Caco-2 (cell line): ENCODE measurements at regions of chr10 and their contacts with region 1.

Region 1: GRCh38 chr10:59181668-59182067 is 5.2 kb downstream of the PHYHIPL start:
- DNase-seq: peak; percentile 51 to 78
- H3K4me3 ChIP-seq: no peak overlapping the region
- H3K4me3 Mint-ChIP-seq: no peak overlapping the region
- H3K27ac Mint-ChIP-seq: no peak overlapping the region
- H3K4me1 ChIP-seq: peaks cover 4% of the 10 kb centered on the region; the same call in 1 of the 2 replicates
- H3K4me1 Mint-ChIP-seq: peaks cover 7% of the 10 kb centered on the region
- H3K27me3 ChIP-seq: no peaks in the 10 kb centered on the region
- H3K27me3 Mint-ChIP-seq: no peaks in the 10 kb centered on the region
- CTCF ChIP-seq: peak; percentile 87 to 89

Region 2: DNA sequence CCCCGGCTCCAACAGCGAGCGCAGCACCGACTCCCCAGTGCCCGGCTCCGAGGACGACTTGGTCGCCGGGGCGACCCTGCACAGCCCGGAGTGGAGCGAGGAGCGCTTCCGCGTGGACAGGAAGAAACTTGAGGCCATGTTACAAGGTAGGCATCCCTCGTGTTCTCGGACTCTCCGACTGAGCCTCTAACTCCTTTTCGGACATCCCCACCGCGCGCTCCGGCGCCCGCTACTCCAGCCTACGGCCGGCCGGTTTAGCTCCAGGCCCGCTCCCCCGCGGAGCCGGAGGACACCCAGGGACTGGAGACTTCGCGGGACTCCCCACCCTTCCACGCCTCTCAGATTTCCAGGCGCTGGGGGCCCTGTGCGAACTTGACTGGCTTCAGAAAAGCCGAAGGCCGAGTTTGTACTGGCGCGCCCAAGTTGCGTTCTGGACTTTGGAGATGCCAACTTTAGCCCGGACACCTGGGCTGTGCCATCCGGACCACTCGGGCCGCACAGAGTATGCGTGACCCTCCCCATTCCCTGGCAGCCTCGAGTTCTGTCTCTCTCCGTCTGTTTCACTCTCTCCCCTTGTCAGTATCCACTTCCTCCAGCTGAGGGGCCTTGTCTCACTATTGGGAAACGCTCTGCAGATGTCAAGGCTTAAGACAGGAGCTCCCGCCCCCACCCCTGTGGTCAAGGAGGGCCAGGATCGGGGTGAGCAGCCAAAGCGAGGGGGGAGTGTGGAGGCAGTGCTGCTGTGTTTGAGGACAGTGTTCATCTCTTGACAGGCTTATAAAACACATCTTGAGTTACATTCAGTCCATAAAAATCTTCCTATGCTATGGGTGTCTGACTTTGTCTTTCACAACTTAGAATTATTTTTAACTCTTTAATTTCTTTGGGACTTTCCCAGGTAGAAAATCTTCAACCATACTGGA is 668.2 kb before region 1 on chr10:
- CTCF ChIA-PET with region 1: no interaction called
- POLR2A ChIA-PET with region 1: interaction called, 6 read pairs
- intact Hi-C with region 1: loop called (anchors 10 kb)
- DNase-seq: peak; percentile 89 to 91
- H3K4me3 ChIP-seq: peak overlapping the region; percentile 98
- H3K4me3 Mint-ChIP-seq: peak overlapping the region; percentile 94
- H3K27ac Mint-ChIP-seq: peak overlapping the region; percentile 78
- H3K4me1 ChIP-seq: peaks cover 33% of the 10 kb centered on the region
- H3K4me1 Mint-ChIP-seq: peaks cover 19% of the 10 kb centered on the region
- H3K27me3 ChIP-seq: no peaks in the 10 kb centered on the region
- H3K27me3 Mint-ChIP-seq: no peaks in the 10 kb centered on the region
- CTCF ChIP-seq: no peak

Region 3: GRCh38 chr10:58641095-58641531 is 540.6 kb before region 1 on chr10:
- CTCF ChIA-PET with region 1: no interaction called
- POLR2A ChIA-PET with region 1: no interaction called
- intact Hi-C with region 1: loop called (anchors 10 kb)
- DNase-seq: peak; percentile 70 to 77
- H3K4me3 ChIP-seq: no peak overlapping the region
- H3K4me3 Mint-ChIP-seq: peak overlapping the region; percentile 44
- H3K27ac Mint-ChIP-seq: peak overlapping the region; percentile 60
- H3K4me1 ChIP-seq: peaks cover 42% of the 10 kb centered on the region
- H3K4me1 Mint-ChIP-seq: peaks cover 55% of the 10 kb centered on the region
- H3K27me3 ChIP-seq: no peaks in the 10 kb centered on the region
- H3K27me3 Mint-ChIP-seq: no peaks in the 10 kb centered on the region
- CTCF ChIP-seq: peak; percentile 60 to 73

Region 4: DNA sequence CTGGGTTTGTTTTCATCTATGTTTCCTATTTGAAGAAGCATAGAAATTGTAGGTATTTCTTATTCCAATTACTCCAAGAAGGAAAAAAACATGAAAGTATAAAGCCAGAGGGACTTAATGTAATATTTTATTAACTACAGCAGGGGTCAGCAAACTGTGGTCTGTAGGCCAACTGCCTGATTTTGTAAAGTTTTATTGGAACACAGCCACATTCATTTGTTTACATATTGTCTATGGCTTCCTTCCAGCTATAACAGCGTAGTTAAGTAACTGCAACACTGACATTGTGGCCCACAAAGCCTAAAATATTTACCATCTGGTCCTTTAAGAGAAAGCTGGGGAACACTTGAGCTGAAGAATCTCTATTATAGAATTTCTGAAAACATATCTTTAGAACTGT is 362.8 kb before region 1 on chr10:
- CTCF ChIA-PET with region 1: no interaction called
- POLR2A ChIA-PET with region 1: no interaction called
- intact Hi-C with region 1: loop called (anchors 10 kb)
- DNase-seq: no peak
- H3K4me3 ChIP-seq: no peak overlapping the region
- H3K4me3 Mint-ChIP-seq: no peak overlapping the region
- H3K27ac Mint-ChIP-seq: no peak overlapping the region
- H3K4me1 ChIP-seq: peaks cover 36% of the 10 kb centered on the region
- H3K4me1 Mint-ChIP-seq: peaks cover 64% of the 10 kb centered on the region
- H3K27me3 ChIP-seq: no peaks in the 10 kb centered on the region
- H3K27me3 Mint-ChIP-seq: no peaks in the 10 kb centered on the region
- CTCF ChIP-seq: peak in 1 of 2 experiments; percentile 14

Region 5: GRCh38 chr10:58967551-58968388 is 213.9 kb before region 1 on chr10:
- CTCF ChIA-PET with region 1: no interaction called
- POLR2A ChIA-PET with region 1: no interaction called
- intact Hi-C with region 1: loop called (anchors 1 kb)
- DNase-seq: peak; percentile 89 to 92
- H3K4me3 ChIP-seq: no peak overlapping the region
- H3K4me3 Mint-ChIP-seq: peak overlapping the region; percentile 20
- H3K27ac Mint-ChIP-seq: peak overlapping the region; percentile 14
- H3K4me1 ChIP-seq: peaks cover 31% of the 10 kb centered on the region
- H3K4me1 Mint-ChIP-seq: peaks cover 47% of the 10 kb centered on the region
- H3K27me3 ChIP-seq: no peaks in the 10 kb centered on the region
- H3K27me3 Mint-ChIP-seq: no peaks in the 10 kb centered on the region
- CTCF ChIP-seq: no peak

Region 6: DNA sequence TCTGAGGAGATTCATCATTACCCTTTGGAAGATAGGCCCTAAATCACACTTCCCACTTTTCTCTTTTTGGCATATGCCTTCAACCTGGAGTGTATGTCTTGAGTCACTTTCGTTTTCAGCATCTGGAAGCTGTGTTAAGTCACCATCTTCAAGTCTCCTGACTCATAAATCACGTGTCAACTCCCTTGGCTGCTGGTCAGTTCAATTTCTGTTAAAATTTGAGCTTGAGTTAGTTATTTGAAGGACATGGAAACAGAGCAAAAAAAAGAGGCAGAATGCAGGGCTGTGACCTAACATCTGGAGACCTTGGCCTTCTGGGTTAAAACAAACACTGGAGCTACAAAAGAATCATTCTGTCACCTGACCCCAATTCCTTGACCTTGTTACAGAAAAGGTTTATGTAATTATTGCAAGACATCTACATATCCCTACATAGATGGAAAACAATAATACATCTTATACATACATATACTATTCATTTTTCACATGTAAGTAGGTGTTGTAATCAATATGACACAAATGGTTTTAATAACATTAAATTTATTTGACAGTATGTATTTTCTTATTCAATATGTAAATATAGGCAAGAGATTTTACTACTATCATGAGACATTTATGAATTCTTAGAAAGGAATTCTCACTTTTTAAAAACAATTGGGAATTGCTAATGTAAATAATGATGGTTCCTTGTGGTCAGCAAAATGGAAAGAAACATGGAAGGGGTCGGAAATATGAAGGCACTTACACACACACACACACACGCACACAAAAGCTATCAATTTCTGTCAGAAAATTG is 175.0 kb before region 1 on chr10:
- CTCF ChIA-PET with region 1: no interaction called
- POLR2A ChIA-PET with region 1: interaction called, 4 read pairs
- intact Hi-C with region 1: loop called (anchors 2 kb)
- DNase-seq: no peak
- H3K4me3 ChIP-seq: no peak overlapping the region
- H3K4me3 Mint-ChIP-seq: peak overlapping the region; percentile 2
- H3K27ac Mint-ChIP-seq: peak overlapping the region; percentile 68
- H3K4me1 ChIP-seq: peaks cover 76% of the 10 kb centered on the region
- H3K4me1 Mint-ChIP-seq: peaks cover 55% of the 10 kb centered on the region
- H3K27me3 ChIP-seq: no peaks in the 10 kb centered on the region
- H3K27me3 Mint-ChIP-seq: no peaks in the 10 kb centered on the region
- CTCF ChIP-seq: no peak

Region 7: GRCh38 chr10:59227136-59227673 is 45.5 kb after region 1 on chr10:
- CTCF ChIA-PET with region 1: interaction called, 3 read pairs
- POLR2A ChIA-PET with region 1: no interaction called
- intact Hi-C with region 1: loop called (anchors 2 kb)
- DNase-seq: peak in 1 of 2 experiments; percentile 34
- H3K4me3 ChIP-seq: no peak overlapping the region
- H3K4me3 Mint-ChIP-seq: no peak overlapping the region
- H3K27ac Mint-ChIP-seq: no peak overlapping the region
- H3K4me1 ChIP-seq: peaks cover 16% of the 10 kb centered on the region
- H3K4me1 Mint-ChIP-seq: peaks cover 23% of the 10 kb centered on the region
- H3K27me3 ChIP-seq: no peaks in the 10 kb centered on the region
- H3K27me3 Mint-ChIP-seq: no peaks in the 10 kb centered on the region
- CTCF ChIP-seq: peak in 1 of 2 experiments; percentile 37